Posterior vena cava (tissue), 2 donors: ENCODE measurements at regions of chr1 and their contacts with region 1.

Region 1: GRCh38 chr1:55747408-55747841 is 532.3 kb upstream of the USP24 start:
- DNase-seq: peak; percentile 77

Region 2: GRCh38 chr1:54406339-54407153 is 1340.9 kb before region 1 on chr1 and contains the start of gene SSBP3:
- intact Hi-C with region 1: no loop called
- DNase-seq: peak; percentile 97
- total RNA-seq, gene SSBP3: 41.8 to 56.1 TPM

Region 3: DNA sequence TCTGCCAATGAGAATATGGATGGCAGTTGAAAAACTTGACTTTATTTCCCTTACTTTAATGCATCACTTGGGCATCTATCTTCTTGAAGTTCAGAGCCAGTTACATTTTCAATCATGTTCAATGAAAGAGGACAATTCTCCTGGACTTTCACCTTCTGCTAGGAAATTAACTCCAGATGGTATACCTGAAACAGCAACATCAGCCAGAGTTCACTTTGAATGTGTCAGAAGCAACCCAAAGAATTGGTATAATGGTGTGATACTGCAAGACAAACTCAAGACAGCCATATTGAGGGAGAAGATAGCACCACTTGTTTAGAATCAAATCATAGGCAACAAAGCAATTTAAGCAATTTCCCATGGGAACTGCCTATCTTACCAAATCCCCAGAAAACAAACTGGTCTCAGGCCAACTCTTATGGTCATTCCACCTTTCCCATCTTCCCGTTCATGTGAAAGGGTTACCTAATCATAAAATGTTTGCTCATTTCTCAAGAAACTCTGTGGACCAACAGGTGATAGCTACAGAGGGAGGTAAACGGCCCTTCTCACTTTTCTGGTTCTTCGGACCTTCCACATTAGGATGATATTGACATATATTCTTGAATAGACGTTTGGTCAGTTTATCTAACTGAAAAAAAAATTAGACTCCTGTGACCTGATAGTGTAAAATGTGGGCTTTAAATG is 1248.1 kb after region 1 on chr1:
- intact Hi-C with region 1: loop called in 1 of 2 experiments (anchors 5 kb)
- DNase-seq: no peak